Heart right ventricle (tissue), 16 donors: ENCODE measurements at regions of chr3 and their contacts with region 1.

Region 1: DNA sequence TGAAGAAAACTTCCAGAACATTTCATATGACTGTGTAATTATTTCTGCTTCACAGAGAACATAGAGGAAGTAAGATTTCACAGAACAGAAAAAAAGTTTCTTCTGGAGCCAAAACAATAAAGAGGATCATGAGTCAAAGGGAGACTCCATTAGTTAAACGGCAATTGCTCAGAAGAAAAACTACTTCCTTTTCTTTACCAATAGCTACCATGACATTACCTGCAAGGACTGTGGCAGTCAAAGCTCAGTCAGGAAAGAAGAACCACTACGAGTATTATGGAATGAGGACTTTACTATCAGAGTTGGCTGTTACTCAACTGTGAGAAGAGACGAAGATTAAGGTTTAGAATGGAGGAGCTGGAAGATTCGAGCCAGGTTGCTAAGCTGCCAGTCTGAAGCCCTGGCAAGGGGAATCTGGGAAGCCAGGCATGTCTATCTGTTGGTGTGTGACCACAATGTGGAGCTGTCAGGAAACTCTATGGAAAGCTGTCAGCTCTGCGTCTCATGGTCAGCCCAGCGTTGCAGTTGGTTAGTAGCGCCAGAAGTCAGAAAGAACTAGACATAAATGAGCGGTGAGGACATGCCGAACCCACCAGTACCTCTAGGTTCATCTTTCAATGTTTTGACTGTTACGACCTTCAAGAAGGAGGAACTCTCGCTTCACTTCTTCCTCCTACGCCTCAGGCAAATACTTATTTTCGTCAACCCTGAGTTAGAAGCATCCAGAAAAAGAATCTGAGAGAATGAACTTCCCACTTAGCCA is 604.3 kb downstream of the FGF12 start:
- DNase-seq: no peak
- ATAC-seq: peak in 2 of 8 donors; percentile 17 to 63
- H3K4me3 ChIP-seq: no peak overlapping the region
- H3K27ac ChIP-seq: no peak overlapping the region
- H3K4me1 ChIP-seq: no peaks in the 10 kb centered on the region
- H3K27me3 ChIP-seq: no peaks in the 10 kb centered on the region
- CTCF ChIP-seq: no peak

Region 2: DNA sequence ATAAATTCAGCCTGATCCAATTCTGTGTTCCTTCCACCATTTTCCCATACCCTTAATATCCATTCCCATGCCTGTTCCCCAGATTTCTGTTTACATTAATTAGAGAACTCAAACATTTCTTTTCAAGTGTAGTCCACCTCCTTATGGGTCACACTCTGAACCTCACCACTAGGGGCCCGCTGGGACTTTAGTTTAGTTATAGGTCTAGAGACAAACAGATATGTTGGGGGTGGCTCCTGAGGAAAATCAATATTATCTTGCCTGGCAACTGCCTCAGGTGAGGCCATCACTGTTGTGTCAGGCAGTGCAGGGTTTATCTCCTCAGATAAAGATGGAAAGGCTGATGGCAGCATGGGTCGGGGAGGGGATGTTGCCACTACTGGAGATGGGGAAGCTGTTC is 1873.6 kb before region 1 on chr3:
- intact Hi-C with region 1: loop called in 1 of 10 experiments (anchors 5 kb)
- DNase-seq: no peak
- ATAC-seq: no peak
- H3K4me3 ChIP-seq: no peak overlapping the region
- H3K27ac ChIP-seq: no peak overlapping the region
- H3K4me1 ChIP-seq: no peaks in the 10 kb centered on the region
- H3K27me3 ChIP-seq: no peaks in the 10 kb centered on the region
- CTCF ChIP-seq: no peak